Head of caudate nucleus (tissue), 42 donors: ENCODE measurements at regions of chr11 and their contacts with region 1.

Region 1: DNA sequence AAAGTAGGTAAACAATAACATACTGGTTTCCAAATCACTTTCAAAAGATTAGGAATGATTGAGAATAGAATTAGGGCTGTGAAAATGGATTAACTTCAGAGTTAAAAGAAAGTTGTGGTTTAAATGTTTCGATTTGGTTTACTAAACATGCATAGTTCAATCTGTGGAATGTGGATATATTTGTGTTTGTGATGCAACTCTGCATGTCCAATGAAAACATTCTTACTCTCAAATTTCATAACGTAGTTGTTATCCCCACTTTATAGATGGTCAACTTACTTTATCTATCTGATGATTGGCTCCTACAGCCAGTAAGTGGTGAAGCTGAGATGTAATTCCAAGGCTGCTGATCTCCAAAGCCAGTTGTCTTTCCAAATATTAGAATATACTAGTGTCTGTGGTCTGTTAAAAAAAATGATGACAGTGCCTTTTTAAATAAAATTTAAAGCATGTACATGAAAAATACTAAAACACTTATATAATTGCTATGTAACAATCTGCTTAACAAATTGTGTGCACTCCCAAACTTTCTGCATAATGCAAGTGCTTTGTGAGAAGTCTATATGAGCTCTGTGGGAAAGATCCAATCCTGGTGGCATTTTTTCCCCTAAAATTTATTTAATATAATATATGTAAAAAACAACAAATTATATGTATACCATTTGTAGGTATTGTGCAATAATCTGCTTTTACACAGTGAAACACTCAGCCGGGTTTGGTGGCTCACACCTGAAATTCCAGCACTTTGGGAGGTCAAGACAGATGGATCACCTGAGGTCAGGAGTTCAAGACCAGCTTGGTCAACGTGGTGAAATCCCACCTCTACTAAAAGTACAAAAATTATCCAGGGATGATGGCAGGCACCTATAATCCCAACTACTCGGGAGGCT is 9.7 kb upstream of the SIK3 start:
- DNase-seq: peak in 1 of 42 donors; percentile 15

Region 2: DNA sequence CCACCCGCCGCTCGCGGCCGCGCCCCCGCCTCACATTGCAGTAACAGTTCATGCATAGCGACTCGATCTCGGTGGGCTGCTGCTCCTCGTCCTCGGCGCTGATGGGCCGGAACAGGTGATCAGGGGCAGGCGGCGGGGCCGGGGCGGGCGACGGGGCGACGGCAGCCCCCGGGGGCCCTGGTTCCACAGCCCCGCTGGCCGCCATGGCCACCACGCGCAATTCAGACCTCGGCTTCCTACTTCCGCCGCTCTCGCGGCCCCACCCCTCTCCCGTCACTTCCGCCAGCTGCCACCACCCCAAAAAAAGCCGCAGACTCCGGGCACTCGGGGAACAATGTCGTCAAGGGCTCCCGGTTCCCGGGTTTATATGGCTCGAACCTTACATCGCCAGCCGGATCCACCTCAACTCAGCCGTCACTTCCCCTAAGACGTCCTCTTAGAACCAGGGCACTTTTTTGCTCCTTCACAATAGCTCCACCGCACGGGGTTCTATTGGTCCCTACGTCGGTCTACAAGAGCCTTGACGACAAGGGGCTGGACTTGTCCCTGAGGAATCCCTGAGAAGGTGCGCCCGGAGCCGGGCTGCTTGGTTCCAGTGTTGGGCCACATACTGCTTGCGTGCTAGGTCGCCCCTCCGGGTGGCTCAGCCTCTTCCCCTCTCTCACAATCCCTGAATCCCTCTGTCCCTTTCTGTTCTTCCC is 320.0 kb before region 1 on chr11 and contains the start of gene ZPR1:
- intact Hi-C with region 1: loop called (anchors 2 kb)
- DNase-seq: peak; percentile 77 to 95 (median 89)